Ascending aorta (tissue), 2 donors: ENCODE measurements at regions of chr7 and their contacts with region 1.

Region 1: GRCh38 chr7:27196287-27196767 is 3.6 kb downstream of the HOXA13 start:
- DNase-seq: peak in 1 of 2 donors; percentile 87
- H3K4me3 ChIP-seq: no peak overlapping the region
- H3K27ac ChIP-seq: no peak overlapping the region
- H3K4me1 ChIP-seq: peaks cover 11 to 18% of the 10 kb centered on the region in 2 donors
- H3K27me3 ChIP-seq: peaks cover 60% of the 10 kb centered on the region
- CTCF ChIP-seq: peak; percentile 59 to 80 (median 59)

Region 2: DNA sequence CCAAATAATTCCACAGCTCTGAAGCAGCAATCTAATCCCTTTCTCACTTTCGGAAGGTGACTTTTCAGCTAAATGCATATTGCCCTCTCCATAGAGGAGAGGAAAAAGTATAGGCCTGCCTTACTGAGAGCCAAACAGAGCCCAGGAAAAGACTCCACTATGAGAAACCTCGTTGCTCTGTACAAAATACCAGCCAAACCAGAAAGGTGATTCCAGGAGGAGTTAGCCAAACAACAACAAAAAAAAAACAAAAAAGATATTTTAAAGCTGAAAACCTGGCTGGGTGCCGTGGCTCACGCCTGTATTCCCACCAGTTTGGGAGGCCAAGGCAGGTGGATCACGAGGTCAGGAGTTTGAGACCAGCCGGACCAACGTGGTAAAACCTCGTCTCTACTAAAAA is 171.1 kb before region 1 on chr7:
- intact Hi-C with region 1: no loop called
- DNase-seq: no peak
- H3K4me3 ChIP-seq: no peak overlapping the region
- H3K27ac ChIP-seq: no peak overlapping the region
- H3K4me1 ChIP-seq: no peaks in the 10 kb centered on the region
- H3K27me3 ChIP-seq: no peaks in the 10 kb centered on the region
- CTCF ChIP-seq: no peak

Region 3: DNA sequence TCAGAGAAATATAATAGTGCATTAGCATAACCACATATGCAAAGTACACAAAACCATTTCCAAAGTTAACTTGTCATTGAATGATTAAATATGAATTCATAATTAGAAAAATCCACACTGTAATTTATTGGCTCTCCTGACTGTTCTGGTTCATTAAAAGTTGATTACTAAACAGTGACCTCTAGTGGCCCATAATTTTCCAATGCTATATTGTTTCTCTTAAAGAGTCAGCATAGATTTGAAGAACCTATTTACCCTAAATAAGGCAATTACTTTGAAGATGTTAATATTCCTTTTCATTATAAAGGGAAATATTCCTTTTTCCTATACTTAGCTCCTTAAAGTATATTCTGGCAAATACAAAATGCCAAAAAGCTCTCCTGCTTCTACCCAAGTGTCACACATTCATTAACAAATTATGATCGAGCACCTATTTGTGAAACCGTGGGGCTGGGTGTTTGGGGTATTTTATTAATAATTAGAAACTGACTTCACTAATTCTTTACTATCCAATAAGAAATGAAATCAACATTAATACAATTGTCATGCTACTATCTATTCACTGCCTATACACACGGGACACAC is 380.1 kb after region 1 on chr7:
- intact Hi-C with region 1: loop called (anchors 10 kb)
- DNase-seq: no peak
- H3K4me3 ChIP-seq: no peak overlapping the region
- H3K27ac ChIP-seq: no peak overlapping the region
- H3K4me1 ChIP-seq: no peaks in the 10 kb centered on the region
- H3K27me3 ChIP-seq: no peaks in the 10 kb centered on the region
- CTCF ChIP-seq: peak in 2 of 3 experiments; percentile 34 to 56

Region 4: DNA sequence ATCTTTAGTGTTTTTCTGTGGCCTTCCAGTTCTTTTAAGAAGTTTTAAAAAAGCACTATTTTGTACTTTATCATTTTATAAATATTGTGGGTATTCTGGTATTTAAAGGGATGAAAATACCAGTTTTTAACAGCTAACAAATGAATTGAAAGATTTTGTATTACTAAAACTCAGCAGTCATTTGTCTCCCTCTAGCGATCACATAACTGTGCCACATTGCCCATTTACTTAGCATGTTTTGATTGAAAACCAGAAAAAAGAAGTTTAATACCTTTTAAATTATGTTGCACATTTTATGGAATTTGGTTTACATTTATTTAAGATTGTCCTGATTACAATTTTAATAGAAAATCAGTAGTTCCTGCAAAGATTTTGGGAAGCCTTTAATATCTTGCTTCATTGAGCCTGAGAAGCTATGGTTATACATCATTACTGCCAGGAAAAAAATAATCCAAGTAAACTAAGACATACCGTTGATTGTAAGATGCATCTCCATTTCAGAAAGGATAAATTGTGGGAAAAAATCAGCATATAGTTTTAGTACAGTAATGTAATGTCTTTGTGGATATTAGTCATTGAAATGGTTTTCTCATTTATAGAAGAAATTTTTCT is 578.5 kb after region 1 on chr7:
- intact Hi-C with region 1: loop called (anchors 10 kb)
- DNase-seq: no peak
- H3K4me3 ChIP-seq: no peak overlapping the region
- H3K27ac ChIP-seq: no peak overlapping the region
- H3K4me1 ChIP-seq: no peaks in the 10 kb centered on the region
- H3K27me3 ChIP-seq: no peaks in the 10 kb centered on the region
- CTCF ChIP-seq: peak; percentile 32 to 70 (median 52)

Region 5: DNA sequence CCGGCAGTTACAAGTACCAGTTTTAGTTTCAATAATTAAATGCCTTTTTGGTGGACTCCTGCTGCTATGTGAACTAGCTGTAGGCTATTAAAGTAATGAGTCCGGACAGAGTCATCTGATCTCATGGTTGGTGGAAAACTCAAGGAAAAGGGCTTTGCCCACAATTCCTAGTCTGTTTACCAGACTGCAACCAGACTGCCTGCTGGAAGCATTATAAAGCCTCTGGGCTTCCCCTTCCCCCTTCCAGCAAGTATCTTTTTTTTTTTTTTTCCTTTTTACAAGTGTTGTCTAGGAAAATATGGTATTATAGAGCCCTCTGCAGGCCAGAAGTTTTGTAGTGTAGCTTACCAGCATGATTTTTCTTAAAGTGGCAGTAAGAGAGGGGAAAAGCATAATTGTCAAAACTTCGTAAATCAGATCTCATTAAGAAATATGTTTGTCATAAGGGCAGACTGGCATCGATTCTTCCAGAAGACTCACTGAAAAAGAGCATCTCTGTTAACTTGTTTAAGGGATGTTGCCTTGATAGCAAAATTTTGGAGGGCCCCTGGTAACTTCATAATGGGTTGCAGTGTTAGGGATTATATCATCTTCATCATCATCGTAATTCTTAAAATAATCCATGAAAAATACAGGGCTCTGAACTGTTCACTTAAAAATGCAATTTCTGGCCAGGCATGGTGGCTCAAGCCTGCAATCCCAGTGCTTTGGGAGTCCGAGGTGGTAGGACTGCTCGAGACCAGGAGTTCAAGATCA is 724.9 kb after region 1 on chr7:
- intact Hi-C with region 1: loop called (anchors 5 kb)
- DNase-seq: no peak
- H3K4me3 ChIP-seq: no peak overlapping the region
- H3K27ac ChIP-seq: no peak overlapping the region
- H3K4me1 ChIP-seq: peaks cover 0 to 4% of the 10 kb centered on the region in 2 donors
- H3K27me3 ChIP-seq: no peaks in the 10 kb centered on the region
- CTCF ChIP-seq: peak in 2 of 3 experiments; percentile 11 to 49

Region 6: GRCh38 chr7:28020302-28020940 is 824.1 kb after region 1 on chr7:
- intact Hi-C with region 1: loop called (anchors 5 kb)
- DNase-seq: peak in 1 of 2 donors; percentile 71
- H3K4me3 ChIP-seq: no peak overlapping the region
- H3K27ac ChIP-seq: no peak overlapping the region
- H3K4me1 ChIP-seq: peaks cover 5 to 12% of the 10 kb centered on the region in 2 donors
- H3K27me3 ChIP-seq: no peaks in the 10 kb centered on the region
- CTCF ChIP-seq: peak; percentile 75 to 88 (median 85)

Region 7: GRCh38 chr7:28096713-28097112 is 900.4 kb after region 1 on chr7:
- intact Hi-C with region 1: loop called (anchors 5 kb)
- DNase-seq: peak in 1 of 2 donors; percentile 76
- H3K4me3 ChIP-seq: no peak overlapping the region
- H3K27ac ChIP-seq: no peak overlapping the region
- H3K4me1 ChIP-seq: peaks cover 0 to 5% of the 10 kb centered on the region in 2 donors
- H3K27me3 ChIP-seq: no peaks in the 10 kb centered on the region
- CTCF ChIP-seq: peak; percentile 79 to 80 (median 79)

Region 8: DNA sequence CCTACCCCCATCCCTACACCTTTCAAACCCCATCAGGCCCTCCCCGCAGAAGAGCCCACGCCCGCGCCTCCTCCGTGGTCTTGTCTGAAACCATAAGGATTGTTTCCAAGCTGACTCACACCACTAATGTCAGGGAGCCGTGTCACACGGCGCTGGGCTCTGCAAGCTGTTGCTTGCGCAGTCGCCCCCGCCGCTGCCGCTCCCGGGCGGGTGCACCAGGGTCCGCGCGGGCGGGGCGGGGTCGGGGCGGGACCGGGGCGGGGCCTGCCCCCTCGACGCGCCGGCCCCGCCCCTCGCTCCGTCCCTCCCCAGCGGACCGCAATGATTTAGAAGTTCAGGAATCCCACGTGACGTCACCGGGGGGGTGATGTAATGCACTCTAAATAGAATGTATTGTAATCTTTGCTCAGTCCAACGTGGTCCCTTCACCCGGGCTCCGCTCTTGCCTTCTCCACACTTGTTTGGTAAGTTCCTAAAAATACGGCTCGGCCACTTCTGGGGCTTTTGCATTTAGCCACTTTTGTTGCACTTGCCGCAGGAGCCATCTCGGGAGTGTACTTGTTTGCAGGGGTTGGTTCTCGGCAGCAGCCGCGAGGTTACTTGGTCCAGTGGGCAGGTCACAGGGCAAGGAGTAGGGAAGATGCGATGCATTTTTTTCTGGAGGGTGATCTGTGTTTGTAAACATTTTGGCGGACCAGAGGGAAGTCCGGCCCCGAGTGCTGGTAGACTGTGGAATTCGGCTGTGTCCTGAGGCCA is 1212.8 kb after region 1 on chr7:
- intact Hi-C with region 1: loop called (anchors 10 kb)
- DNase-seq: peak; percentile 91 to 99
- H3K4me3 ChIP-seq: peak overlapping the region; percentile 59 to 86
- H3K27ac ChIP-seq: peak overlapping the region; percentile 89 to 91
- H3K4me1 ChIP-seq: peaks cover 6 to 27% of the 10 kb centered on the region in 2 donors
- H3K27me3 ChIP-seq: no peaks in the 10 kb centered on the region
- CTCF ChIP-seq: no peak